RWPE1 (cell line): ENCODE measurements at regions of chr7 and their contacts with region 1.

Region 1: GRCh38 chr7:130087364-130087763 is 17.0 kb downstream of the KLHDC10 start:
- DNase-seq: no peak
- H3K27ac ChIP-seq: no peak overlapping the region
- CTCF ChIP-seq: no peak

Region 2: DNA sequence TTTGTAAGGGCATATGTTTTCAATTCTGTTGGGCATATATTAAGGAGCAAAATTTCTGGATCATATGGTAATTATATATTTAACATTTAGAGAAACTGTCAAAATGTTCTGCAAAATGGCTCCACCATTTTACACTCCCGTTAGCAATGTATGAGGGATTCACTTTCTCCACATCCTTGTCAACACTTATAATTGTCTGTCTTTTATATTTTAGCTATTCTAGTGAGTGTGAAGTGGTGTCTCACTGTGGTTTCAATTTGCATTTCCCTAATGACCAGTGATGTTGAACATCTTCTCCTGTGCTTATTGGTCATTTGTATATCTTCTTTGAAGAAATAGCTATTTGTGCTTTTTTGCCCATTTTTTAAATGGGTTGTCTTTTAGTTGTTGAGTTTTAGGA is 25.1 kb before region 1 on chr7:
- CTCF ChIA-PET with region 1: interaction called, 12 read pairs
- POLR2A ChIA-PET with region 1: no interaction called
- DNase-seq: no peak
- H3K27ac ChIP-seq: no peak overlapping the region
- CTCF ChIP-seq: no peak